Stomach (tissue), 19 donors: ENCODE measurements at regions of chr20 and their contacts with region 1.

Region 1: DNA sequence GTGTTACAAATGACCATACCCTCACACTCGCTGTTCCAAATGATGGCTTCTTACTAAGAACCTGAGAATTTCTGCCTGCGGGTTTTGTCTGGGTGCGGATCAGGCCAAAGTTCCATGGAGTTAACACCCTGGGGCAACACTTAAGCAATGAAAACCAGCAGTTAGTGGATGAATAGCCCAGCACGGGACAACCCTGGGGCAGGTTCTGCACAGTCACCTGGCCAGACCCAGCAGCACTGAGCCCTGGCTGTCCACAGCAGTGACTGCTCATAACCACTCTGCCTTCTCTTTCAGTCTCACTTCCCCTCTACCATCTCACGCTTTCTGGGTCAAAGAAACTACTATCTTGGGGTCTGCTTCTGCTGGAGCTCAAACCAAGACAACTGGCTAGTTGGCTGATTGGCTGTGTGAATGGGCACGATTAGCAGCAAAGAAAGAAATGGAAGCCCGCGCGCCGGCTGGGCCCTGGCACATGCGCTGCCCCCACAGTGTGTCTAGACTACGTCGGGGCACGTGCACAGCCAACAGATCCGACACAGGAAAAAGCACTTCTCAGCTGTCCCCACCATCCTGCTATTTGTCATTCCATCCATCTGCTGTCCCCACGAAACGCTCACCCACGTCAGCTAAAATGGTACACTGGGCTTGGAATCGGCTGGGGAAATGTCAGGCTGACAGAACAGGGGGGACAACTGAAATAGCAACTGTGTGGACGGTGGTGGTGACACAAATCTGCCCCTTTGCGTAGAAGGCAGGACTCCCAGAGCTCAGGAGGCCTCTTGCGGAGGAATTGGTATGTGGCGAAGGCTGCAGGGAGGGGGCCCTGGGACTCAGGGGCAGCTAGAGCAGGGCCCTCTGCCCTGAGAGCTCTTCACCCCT is 36.7 kb downstream of the MGME1 start:
- DNase-seq: peak in 1 of 2 donors; percentile 31
- H3K4me3 ChIP-seq: no peak overlapping the region
- H3K27ac ChIP-seq: peak overlapping the region in 3 of 5 donors; percentile 11 to 38 (median 24)
- H3K4me1 ChIP-seq: peaks cover 15 to 48% (median 40%) of the 10 kb centered on the region in 4 donors
- H3K27me3 ChIP-seq: no peaks in the 10 kb centered on the region
- CTCF ChIP-seq: no peak
- EP300 ChIP-seq: no peak
- POLR2A ChIP-seq: no peak

Region 2: DNA sequence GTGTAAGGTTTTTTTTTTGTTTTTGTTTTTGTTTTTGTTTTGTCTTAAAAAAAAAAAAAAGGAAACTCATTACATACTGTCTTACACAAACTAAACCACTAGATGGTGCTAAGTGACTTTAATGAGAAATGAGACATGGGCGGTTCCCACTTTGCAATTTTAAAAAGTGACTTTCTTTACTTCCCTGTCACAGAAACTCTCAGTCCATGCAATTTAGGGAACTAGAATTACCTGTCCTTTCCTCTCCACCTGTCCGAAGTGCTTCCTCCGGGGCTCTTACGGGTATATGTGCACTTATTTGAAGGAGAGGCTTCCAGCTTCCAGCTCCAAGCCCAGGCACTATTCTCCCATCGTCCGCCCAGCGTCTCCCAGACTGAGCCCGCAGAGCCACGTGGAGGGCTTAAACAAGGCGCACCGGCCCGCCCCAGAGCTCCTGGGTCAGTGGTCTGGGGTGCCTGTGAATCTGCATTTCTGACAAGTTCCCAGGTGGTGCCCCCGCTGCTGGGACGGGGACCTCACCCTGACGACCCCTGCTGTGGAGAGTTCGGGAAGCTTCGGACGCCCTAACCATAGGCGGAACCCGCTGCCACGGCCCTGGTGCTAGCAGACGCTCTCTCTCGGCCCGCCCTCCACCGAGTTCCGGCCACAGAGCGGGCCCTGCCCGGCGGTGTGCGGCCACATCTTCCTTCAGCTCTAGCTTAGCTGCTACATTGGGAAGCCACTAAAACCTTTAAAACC is 500.4 kb before region 1 on chr20:
- intact Hi-C with region 1: loop called (anchors 10 kb)
- DNase-seq: peak; percentile 47 to 81
- H3K4me3 ChIP-seq: peak overlapping the region; percentile 40 to 59 (median 49)
- H3K27ac ChIP-seq: peak overlapping the region in 4 of 5 donors; percentile 37 to 59 (median 44)
- H3K4me1 ChIP-seq: peaks cover 0 to 20% (median 12%) of the 10 kb centered on the region in 4 donors
- H3K27me3 ChIP-seq: no peaks in the 10 kb centered on the region
- CTCF ChIP-seq: peak in 5 of 7 experiments; percentile 40 to 79 (median 64)
- EP300 ChIP-seq: no peak
- POLR2A ChIP-seq: no peak